PC-3 (cell line): ENCODE measurements at regions of chr10 and their contacts with region 1.

Region 1: DNA sequence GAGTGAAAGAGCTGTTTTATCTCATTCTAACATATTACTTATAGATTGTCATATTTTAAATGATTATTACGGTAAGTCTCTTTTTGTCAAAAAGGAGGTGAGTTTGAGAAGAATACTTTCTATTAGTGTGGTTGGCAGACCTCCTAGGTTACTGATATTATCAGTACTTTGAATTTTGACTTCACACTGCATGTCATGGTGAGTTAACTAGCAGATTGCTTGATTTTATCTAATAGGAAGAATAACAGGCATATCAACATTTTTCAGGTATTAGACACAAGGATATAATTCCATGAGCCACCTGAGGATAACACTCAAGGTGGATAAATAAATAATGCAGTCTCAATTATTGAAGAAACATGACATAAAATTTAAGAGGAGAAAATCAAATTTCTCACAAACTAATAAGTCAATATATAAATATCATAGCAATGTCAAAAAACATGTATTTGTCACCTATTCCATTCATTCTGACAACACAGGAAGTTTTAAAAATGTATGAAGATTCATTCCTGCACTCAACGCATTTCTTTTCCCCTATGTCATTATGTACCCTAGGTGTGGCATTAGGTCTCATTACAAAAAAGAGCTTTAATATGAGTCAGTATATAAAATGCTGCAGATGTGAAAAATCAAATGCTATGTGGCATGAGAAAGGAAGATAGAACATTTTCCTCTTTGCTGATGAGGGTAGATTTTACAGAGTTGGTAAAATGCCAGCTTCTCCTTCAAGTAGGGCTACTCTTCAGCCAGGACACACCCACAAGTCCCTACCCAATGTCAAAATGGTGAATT is 1621.6 kb downstream of the REEP3 start:
- DNase-seq: peak; percentile 91
- ATAC-seq: peak; percentile 97
- H3K4me3 ChIP-seq: no peak overlapping the region; the same call in 1 of the 2 replicates
- H3K27ac ChIP-seq: peak overlapping the region; percentile 65
- H3K4me1 ChIP-seq: peaks cover 29% of the 10 kb centered on the region
- H3K27me3 ChIP-seq: no peaks in the 10 kb centered on the region
- CTCF ChIP-seq: no peak

Region 2: GRCh38 chr10:64814201-64814600 is 328.6 kb before region 1 on chr10:
- CTCF ChIA-PET with region 1: no interaction called
- POLR2A ChIA-PET with region 1: no interaction called
- intact Hi-C with region 1: no loop called
- DNase-seq: no peak
- ATAC-seq: no peak
- H3K4me3 ChIP-seq: no peak overlapping the region
- H3K27ac ChIP-seq: no peak overlapping the region
- H3K4me1 ChIP-seq: peaks cover 10% of the 10 kb centered on the region
- H3K27me3 ChIP-seq: no peaks in the 10 kb centered on the region
- CTCF ChIP-seq: no peak

Region 3: GRCh38 chr10:65010845-65011244 is 132.0 kb before region 1 on chr10:
- CTCF ChIA-PET with region 1: no interaction called
- POLR2A ChIA-PET with region 1: no interaction called
- intact Hi-C with region 1: loop called (anchors 5 kb)
- DNase-seq: no peak
- ATAC-seq: peak; percentile 20; the same call in 1 of the 2 replicates
- H3K4me3 ChIP-seq: no peak overlapping the region
- H3K27ac ChIP-seq: no peak overlapping the region
- H3K4me1 ChIP-seq: no peaks in the 10 kb centered on the region; the same call in 1 of the 2 replicates
- H3K27me3 ChIP-seq: no peaks in the 10 kb centered on the region
- CTCF ChIP-seq: no peak

Region 4: GRCh38 chr10:65110029-65110428 is 32.8 kb before region 1 on chr10:
- CTCF ChIA-PET with region 1: no interaction called
- POLR2A ChIA-PET with region 1: no interaction called
- intact Hi-C with region 1: loop called (anchors 1 kb)
- DNase-seq: peak; percentile 75
- ATAC-seq: peak; percentile 65; the same call in 1 of the 2 replicates
- H3K4me3 ChIP-seq: no peak overlapping the region
- H3K27ac ChIP-seq: no peak overlapping the region
- H3K4me1 ChIP-seq: peaks cover 11% of the 10 kb centered on the region
- H3K27me3 ChIP-seq: no peaks in the 10 kb centered on the region
- CTCF ChIP-seq: no peak

Region 5: DNA sequence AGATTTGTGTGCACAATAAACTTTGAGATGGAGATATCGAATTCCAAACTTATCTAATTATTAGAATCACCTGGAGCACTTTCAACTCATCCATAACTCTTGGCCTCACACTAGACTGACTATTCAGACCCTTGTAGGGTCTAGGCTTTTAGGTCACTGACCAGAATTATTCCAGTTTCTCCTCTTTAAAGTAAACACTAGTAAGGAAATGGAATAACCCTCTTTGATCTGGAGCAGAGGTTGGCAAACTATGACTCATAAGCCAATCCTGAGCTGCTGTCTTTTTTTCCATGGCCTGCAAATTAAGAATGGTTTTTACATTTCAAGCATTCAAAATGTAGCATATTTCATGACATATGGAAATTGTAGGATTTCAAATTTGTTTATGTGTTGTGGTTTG is 19.7 kb before region 1 on chr10:
- CTCF ChIA-PET with region 1: no interaction called
- POLR2A ChIA-PET with region 1: no interaction called
- intact Hi-C with region 1: loop called (anchors 2 kb)
- DNase-seq: peak; percentile 86
- ATAC-seq: peak; percentile 96
- H3K4me3 ChIP-seq: no peak overlapping the region
- H3K27ac ChIP-seq: peak overlapping the region; percentile 44
- H3K4me1 ChIP-seq: peaks cover 17% of the 10 kb centered on the region
- H3K27me3 ChIP-seq: no peaks in the 10 kb centered on the region
- CTCF ChIP-seq: no peak

Region 6: GRCh38 chr10:65231148-65231547 is 88.3 kb after region 1 on chr10:
- CTCF ChIA-PET with region 1: no interaction called
- POLR2A ChIA-PET with region 1: no interaction called
- intact Hi-C with region 1: no loop called
- DNase-seq: no peak
- ATAC-seq: no peak
- H3K4me3 ChIP-seq: no peak overlapping the region
- H3K27ac ChIP-seq: no peak overlapping the region
- H3K4me1 ChIP-seq: peaks cover 9% of the 10 kb centered on the region
- H3K27me3 ChIP-seq: no peaks in the 10 kb centered on the region
- CTCF ChIP-seq: no peak

Region 7: GRCh38 chr10:65265502-65265901 is 122.7 kb after region 1 on chr10:
- CTCF ChIA-PET with region 1: no interaction called
- POLR2A ChIA-PET with region 1: no interaction called
- intact Hi-C with region 1: loop called (anchors 5 kb)
- DNase-seq: peak; percentile 27
- ATAC-seq: peak; percentile 66
- H3K4me3 ChIP-seq: no peak overlapping the region
- H3K27ac ChIP-seq: no peak overlapping the region
- H3K4me1 ChIP-seq: no peaks in the 10 kb centered on the region
- H3K27me3 ChIP-seq: no peaks in the 10 kb centered on the region
- CTCF ChIP-seq: no peak

Region 8: DNA sequence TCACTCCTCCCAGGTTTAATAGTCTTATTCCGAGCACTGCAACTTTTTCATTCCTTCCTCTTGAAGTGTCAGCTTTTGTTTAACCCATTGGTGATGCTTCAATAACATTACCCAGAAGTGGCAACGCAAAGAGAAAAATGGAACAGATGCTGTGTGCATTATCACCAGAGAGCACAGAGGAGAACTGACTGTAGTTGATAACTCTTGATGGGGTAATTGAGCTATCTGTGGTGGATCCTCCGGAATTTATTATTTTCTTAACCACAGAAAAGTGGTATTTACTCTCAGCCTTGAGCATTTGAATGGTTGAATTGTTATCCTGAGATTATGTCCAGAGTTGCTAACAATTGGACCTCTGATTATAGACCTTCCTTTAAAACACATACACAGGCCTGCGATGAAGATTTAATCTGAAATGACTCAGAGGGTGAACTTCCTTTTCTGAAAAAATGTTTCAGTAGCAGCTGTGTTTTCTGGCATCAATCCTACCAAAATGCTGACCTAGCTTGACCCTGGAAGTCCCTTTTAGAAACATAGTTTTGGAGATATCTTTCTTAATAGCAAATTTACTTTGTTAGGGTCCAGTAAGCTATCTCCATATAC is 198.6 kb after region 1 on chr10:
- CTCF ChIA-PET with region 1: no interaction called
- POLR2A ChIA-PET with region 1: no interaction called
- intact Hi-C with region 1: loop called (anchors 5 kb)
- DNase-seq: peak; percentile 90
- ATAC-seq: peak; percentile 90
- H3K4me3 ChIP-seq: no peak overlapping the region
- H3K27ac ChIP-seq: peak overlapping the region; percentile 29
- H3K4me1 ChIP-seq: peaks cover 27% of the 10 kb centered on the region
- H3K27me3 ChIP-seq: no peaks in the 10 kb centered on the region
- CTCF ChIP-seq: no peak